Activated B cell treated with CpG ODN at 0.5 μM for 24 hours (primary cell): ENCODE measurements at regions of chr1 and their contacts with region 1.

Region 1: DNA sequence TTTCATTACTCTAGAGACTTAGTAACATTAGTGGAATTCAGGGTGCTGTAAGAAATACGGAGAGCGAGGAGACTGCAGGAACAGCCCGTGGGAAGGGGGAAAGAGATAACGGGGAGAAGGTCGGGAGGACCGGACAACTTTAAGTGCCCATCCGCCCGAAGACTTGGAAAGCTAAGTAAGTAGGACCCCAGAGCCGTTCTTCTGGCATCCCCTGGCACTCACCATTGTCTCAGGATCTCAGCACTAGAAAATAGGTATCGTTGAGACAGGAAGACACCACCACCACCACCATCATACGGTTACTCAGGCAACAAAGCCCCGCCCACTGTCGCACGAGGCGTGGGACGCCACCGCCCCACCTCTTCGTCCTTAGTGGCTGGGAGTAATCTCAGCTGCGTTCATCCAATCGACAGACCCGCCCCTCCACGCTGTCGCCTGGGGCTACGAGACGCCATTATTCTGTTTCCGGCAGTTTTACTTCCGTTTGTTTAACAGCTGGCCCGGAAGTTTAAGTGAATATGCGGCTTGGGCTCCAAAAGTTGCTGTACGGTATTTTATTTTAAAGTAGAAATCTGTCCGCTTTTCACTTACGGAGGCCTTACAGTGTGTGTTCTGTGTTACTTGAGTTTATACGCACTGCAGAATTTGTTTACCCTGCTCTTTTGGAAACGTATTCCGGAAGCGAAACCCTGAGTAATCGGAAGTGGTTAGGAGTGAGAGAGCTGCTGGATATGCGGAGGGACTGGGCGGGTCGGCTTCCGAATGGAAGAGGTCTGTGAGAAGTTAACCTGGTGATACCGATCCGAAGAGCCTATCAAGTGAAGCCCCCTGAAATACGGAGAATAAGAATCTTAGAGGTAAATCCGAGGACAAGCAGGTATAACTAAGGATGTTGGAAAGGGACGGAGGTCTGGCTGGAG is at the starts of genes BLZF1 and NME7:
- DNase-seq: peak; percentile 94
- ATAC-seq: peak; percentile 99
- H3K4me3 Mint-ChIP-seq: peak within 1 kb of the TSS; percentile 56
- H3K27ac Mint-ChIP-seq: no peak within 1 kb of the TSS
- H3K4me1 Mint-ChIP-seq: peaks cover 18% of the 10 kb centered on the region
- H3K27me3 Mint-ChIP-seq: no peaks in the 10 kb centered on the region
- CTCF ChIP-seq: no peak
- total RNA-seq, gene BLZF1: 13.8 and 14.3 TPM in 2 replicates
- total RNA-seq, gene NME7: 14.5 and 16.0 TPM in 2 replicates

Region 2: GRCh38 chr1:168178638-168179437 is 1188.9 kb before region 1 on chr1 and contains the start of gene TIPRL:
- CTCF ChIA-PET with region 1: no interaction called
- POLR2A ChIA-PET with region 1: no interaction called
- intact Hi-C with region 1: loop called (anchors 2 kb)
- DNase-seq: peak; percentile 92
- ATAC-seq: peak; percentile 88
- H3K4me3 Mint-ChIP-seq: no peak within 1 kb of the TSS
- H3K27ac Mint-ChIP-seq: no peak within 1 kb of the TSS
- H3K4me1 Mint-ChIP-seq: peaks cover 2% of the 10 kb centered on the region
- H3K27me3 Mint-ChIP-seq: peaks cover 8% of the 10 kb centered on the region
- CTCF ChIP-seq: no peak
- total RNA-seq, gene TIPRL: 25.5 and 29.8 TPM in 2 replicates

Region 3: DNA sequence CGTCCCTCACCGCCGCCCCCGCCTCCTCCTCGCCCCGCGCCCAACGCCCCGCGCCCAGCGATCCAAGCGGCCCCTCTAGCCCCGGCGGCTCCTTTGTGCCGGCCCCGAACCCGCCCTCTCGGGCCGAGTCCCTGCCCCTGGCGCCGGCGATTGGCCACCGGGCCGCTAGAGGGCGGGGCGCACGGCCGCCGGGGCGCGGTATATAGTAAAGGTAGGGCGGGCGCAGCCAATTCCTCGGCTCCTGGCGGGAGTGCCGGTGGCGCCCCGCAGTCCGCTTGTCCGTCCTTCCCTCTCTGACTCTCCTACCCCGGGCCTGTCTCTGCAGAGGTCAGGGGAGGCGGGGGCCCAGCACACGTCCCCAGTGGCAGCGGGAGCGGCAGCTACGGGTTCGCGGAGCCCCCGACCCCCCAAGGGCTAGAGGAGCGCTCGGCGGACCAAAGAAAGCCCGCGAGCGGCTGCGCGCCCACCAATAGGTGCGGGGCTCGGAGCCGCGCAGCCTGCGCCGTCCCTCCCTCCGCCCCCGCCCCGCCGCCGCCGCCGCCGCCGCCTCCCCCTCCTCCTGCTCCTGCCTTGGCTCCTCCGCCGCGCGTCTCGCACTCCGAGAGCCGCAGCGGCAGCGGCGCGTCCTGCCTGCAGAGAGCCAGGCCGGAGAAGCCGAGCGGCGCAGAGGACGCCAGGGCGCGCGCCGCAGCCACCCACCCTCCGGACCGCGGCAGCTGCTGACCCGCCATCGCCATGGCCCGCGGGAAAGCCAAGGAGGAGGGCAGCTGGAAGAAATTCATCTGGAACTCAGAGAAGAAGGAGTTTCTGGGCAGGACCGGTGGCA is 261.4 kb before region 1 on chr1 and contains the start of gene ATP1B1:
- CTCF ChIA-PET with region 1: no interaction called
- POLR2A ChIA-PET with region 1: no interaction called
- intact Hi-C with region 1: loop called (anchors 1 kb)
- DNase-seq: peak; percentile 77
- ATAC-seq: peak; percentile 95
- H3K4me3 Mint-ChIP-seq: peak within 1 kb of the TSS; percentile 89
- H3K27ac Mint-ChIP-seq: no peak within 1 kb of the TSS
- H3K4me1 Mint-ChIP-seq: peaks cover 18% of the 10 kb centered on the region
- H3K27me3 Mint-ChIP-seq: peaks cover 35% of the 10 kb centered on the region
- CTCF ChIP-seq: no peak
- total RNA-seq, gene ATP1B1: 1.6 and 1.8 TPM in 2 replicates

Region 4: GRCh38 chr1:169309178-169310166 is 58.3 kb before region 1 on chr1:
- CTCF ChIA-PET with region 1: no interaction called
- POLR2A ChIA-PET with region 1: no interaction called
- intact Hi-C with region 1: no loop called
- DNase-seq: no peak
- ATAC-seq: no peak
- H3K4me3 Mint-ChIP-seq: no peak overlapping the region
- H3K27ac Mint-ChIP-seq: no peak overlapping the region
- H3K4me1 Mint-ChIP-seq: peaks cover 4% of the 10 kb centered on the region
- H3K27me3 Mint-ChIP-seq: no peaks in the 10 kb centered on the region
- CTCF ChIP-seq: no peak

Region 5: DNA sequence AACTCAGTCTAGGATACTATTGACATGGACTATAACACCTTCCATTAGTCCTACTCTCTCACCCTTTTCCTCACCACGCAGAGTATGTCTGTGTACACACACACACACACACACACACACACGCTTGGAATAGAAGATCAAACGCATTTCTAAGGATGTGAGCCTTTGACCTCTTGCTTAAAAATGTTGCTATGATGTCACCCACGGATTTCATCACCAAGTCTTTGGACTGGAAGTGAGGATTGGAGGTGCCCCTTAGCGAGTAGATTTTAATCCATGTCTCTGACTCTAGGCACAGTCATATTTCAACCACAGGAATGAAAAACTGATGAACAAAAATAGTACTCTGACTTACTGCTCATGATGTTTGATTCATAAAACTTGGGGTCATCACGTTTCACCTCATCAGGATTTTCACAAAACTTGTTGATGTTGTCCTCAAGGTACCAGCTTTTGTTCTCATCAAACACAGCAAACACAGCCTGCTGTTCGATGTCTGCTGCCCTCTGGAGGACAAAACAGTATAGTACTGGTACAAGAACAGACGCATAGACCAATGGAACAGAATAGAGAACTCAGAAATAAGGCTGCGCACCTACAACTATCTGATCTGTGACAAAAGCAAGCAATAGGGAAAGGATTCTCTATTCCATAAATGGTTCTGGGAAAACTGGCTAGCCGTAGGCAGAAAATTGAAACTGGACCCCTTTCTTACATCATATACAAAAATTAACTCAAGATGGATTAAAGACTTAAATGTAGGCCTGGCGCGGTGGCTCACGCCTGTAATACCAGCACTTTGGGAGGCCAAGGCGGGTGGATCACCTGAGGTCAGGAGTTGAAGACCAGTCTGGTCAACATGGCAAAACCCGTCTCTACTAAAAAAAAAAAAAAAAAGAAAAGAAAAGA is 178.6 kb after region 1 on chr1:
- CTCF ChIA-PET with region 1: interaction called, 3 read pairs
- POLR2A ChIA-PET with region 1: no interaction called
- intact Hi-C with region 1: loop called (anchors 5 kb)
- DNase-seq: no peak
- ATAC-seq: peak; percentile 78
- H3K4me3 Mint-ChIP-seq: no peak overlapping the region
- H3K27ac Mint-ChIP-seq: no peak overlapping the region
- H3K4me1 Mint-ChIP-seq: no peaks in the 10 kb centered on the region
- H3K27me3 Mint-ChIP-seq: peaks cover 3% of the 10 kb centered on the region
- CTCF ChIP-seq: peak; percentile 73

Region 6: DNA sequence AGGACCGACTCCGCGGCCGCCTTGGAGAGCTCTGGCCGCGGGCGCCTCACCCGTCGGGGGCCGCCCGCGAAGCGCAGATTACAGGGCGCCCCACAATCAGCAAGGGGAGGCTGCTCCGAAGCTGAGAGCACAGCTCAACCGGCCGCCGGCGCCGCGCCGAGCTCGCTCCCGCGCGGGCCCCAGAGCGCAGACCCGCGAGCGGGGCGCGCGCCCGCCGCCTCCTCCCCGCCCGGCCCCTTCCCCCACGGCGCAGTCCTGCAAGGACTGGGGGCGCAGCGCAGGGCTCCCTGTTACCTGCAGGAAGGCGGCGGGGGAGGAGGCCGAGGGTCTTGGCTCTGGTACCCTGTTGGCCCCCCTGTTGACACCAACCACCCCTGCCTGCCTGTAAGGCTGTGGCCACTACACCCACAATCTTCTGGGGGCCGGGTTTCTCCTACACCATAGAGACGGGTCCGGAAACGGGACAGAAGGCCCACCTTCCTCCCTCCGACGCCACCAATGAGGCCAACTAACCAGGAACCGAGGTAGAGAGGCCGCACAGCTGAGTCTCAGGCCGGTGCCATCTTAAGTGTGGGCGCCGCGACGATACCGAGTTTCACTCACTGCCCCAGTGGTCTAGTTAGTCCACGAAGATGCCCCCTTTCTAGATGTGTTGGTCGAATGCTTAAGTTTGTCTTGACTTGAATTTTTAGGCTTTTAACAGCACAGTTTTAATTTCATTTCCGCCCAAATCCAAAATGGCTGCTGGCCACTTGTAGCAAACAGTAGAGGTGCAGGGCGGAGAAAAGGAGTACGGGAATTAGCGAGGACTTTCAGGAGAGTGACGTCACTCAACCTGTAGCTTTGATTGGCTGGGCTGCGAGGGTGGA is 526.0 kb after region 1 on chr1 and contains the start of gene SCYL3:
- CTCF ChIA-PET with region 1: no interaction called
- POLR2A ChIA-PET with region 1: interaction called, 15 read pairs
- intact Hi-C with region 1: loop called (anchors 1 kb)
- DNase-seq: peak; percentile 82
- ATAC-seq: peak; percentile 87
- H3K4me3 Mint-ChIP-seq: peak within 1 kb of the TSS; percentile 88
- H3K27ac Mint-ChIP-seq: peak within 1 kb of the TSS; percentile 100
- H3K4me1 Mint-ChIP-seq: peaks cover 40% of the 10 kb centered on the region
- H3K27me3 Mint-ChIP-seq: peaks cover 4% of the 10 kb centered on the region
- CTCF ChIP-seq: no peak
- total RNA-seq, gene SCYL3: 14.5 and 16.2 TPM in 2 replicates